ENCODE measurements at regions of chr11 and their contacts with region 1.

Region 1: GRCh38 chr11:32960553-32961164 is 55.0 kb upstream of the DEPDC7 start:
- DNase-seq: no peak
- ATAC-seq: peak in 1 of 2 donors; percentile 41
- H3K4me3 ChIP-seq: no peak overlapping the region
- H3K27ac ChIP-seq: no peak overlapping the region
- H3K4me1 ChIP-seq: no peaks in the 10 kb centered on the region
- H3K27me3 ChIP-seq: no peaks in the 10 kb centered on the region
- CTCF ChIP-seq: peak; percentile 42 to 74 (median 58)
- POLR2A ChIP-seq: no peak

Region 2: DNA sequence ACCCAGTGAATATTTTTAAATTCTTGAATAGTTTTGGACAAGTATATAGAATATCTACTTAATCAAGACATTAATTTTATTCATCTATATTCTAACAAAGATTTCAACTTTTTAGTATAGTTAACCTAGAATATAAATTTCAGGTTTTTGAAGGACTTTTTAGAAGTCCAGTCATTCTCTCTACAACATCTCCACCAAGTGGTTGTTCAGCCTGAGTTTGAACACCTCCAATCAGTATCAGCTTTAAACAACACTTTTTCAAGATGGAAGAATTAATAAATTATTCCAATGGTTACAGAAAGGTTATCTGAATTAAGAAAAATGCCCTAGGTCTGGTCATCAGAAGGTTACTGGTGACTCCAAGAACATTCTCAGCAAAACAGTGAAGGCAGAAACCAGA is 345.2 kb before region 1 on chr11:
- in situ Hi-C with region 1: no loop called
- intact Hi-C with region 1: no loop called
- DNase-seq: no peak
- ATAC-seq: no peak
- H3K4me3 ChIP-seq: no peak overlapping the region
- H3K27ac ChIP-seq: no peak overlapping the region
- H3K4me1 ChIP-seq: no peaks in the 10 kb centered on the region
- H3K27me3 ChIP-seq: no peaks in the 10 kb centered on the region
- CTCF ChIP-seq: no peak
- POLR2A ChIP-seq: no peak

Region 3: GRCh38 chr11:33065445-33066178 is 105.0 kb after region 1 on chr11:
- in situ Hi-C with region 1: loop called (anchors 5 to 10 kb)
- intact Hi-C with region 1: loop called (anchors 1 kb)
- DNase-seq: peak; percentile 7 to 39
- ATAC-seq: peak; percentile 62 to 71
- H3K4me3 ChIP-seq: no peak overlapping the region
- H3K27ac ChIP-seq: no peak overlapping the region
- H3K4me1 ChIP-seq: peaks cover 0 to 6% of the 10 kb centered on the region in 2 donors
- H3K27me3 ChIP-seq: no peaks in the 10 kb centered on the region
- CTCF ChIP-seq: peak; percentile 62 to 86 (median 83)
- POLR2A ChIP-seq: no peak

Region 4: DNA sequence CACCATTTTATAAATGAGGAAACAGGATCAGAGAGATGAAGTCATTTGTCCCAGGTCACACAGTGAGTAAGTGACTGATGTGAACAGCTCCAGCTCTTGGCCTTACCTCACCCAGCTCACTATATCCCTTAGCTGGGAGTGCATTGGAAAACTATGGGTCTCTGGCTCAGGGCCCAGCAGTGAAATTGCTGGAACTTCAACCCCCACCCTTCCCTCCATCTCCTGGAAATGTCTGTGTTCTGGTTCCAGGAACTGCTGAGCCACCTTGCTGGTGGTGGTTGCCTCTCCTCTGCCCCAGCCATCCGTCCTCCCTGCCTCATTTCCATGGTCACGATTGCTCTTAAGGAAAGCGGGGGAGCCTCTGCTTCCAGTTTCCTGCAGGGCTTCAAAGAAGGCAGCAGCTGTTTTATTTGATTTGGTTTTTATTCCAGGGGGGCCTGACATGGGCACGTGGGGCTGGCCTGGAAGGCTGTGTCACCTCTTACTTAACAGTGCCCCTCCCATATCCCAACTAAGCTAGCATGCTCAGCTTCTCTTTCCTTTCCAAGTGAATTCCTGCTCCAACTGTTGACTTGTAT is 246.8 kb after region 1 on chr11:
- in situ Hi-C with region 1: no loop called
- intact Hi-C with region 1: no loop called
- DNase-seq: no peak
- ATAC-seq: peak; percentile 19 to 44
- H3K4me3 ChIP-seq: no peak overlapping the region
- H3K27ac ChIP-seq: peak overlapping the region in 2 of 4 donors; percentile 16 to 18
- H3K4me1 ChIP-seq: no peaks in the 10 kb centered on the region
- H3K27me3 ChIP-seq: no peaks in the 10 kb centered on the region
- CTCF ChIP-seq: no peak
- POLR2A ChIP-seq: no peak

Region 5: DNA sequence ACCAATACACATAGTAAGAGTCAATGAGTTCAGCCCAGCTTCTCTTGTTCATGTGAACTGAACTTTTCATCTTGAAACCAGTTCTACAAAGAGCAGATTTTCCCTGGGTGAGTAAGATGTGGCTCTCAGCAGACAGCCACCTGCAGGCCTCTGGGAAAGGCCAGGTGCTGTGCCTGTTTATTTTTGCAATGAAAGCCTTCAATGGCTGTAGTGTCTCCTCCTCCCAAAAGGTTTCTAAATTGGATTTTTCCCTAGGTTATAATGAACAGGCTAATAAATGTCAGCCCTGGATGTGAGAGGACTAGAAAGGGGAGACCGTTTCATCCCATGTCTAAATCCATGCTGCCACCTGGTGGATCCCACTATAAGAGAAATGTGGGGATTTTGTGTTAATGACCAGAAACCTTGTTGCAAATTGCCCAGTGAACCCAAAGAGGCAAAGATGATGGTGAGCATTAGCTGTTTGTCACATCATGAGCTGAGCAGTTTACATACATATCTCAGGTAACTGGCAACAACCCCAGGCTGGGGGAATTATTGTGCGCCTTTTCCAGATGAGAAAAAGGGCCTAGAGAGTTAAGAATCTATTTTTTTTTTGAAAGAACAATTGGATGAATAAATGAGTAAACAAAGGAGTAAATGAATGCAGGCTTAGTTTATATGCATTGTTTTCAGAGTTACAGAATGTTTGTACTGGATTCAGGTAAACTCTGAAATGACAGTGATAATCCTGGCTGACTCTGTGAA is 727.2 kb after region 1 on chr11:
- in situ Hi-C with region 1: no loop called
- intact Hi-C with region 1: loop called (anchors 10 kb)
- DNase-seq: no peak
- ATAC-seq: no peak
- H3K4me3 ChIP-seq: no peak overlapping the region
- H3K27ac ChIP-seq: peak overlapping the region in 1 of 4 donors; percentile 78
- H3K4me1 ChIP-seq: peaks cover 21 to 37% of the 10 kb centered on the region in 2 donors
- H3K27me3 ChIP-seq: no peaks in the 10 kb centered on the region
- CTCF ChIP-seq: peak; percentile 38 to 68 (median 60)
- POLR2A ChIP-seq: no peak